ENCODE measurements at regions of chr7 and their contacts with region 1.

Region 1: GRCh38 chr7:129030440-129030839 is 24.5 kb downstream of the TNPO3 start:
- DNase-seq: no peak
- ATAC-seq: no peak
- H3K4me3 Mint-ChIP-seq: no peak overlapping the region
- H3K27ac Mint-ChIP-seq: no peak overlapping the region
- H3K4me1 Mint-ChIP-seq: peaks cover 40% of the 10 kb centered on the region
- H3K27me3 Mint-ChIP-seq: no peaks in the 10 kb centered on the region
- CTCF ChIP-seq: no peak

Region 2: DNA sequence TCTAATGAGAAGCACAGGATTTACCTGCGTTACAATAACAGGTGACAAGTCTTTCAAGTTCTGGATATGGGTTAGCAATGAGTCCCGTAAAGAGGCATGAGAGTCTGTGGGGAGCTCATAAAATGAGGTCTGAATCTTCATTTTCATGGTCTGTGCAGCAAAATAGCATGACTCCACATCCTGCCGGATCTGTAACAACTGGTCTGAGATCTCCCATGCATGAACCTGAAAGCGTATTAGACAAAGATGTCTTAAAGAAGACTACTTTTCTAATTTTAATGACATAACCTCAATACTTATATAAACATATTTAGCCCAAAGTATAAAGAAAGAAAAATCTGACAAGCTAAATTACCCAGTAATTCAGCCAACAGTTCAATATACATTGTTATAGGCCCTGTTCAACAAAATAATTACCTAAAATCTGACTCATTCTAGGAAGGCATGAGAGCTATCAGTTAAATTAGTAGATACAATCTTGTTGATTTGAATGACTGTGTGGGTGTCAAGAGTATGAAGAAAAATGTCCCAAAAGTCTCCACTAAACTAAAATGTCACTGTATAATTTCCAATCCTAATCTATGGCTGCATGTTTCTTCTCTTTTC is 12.4 kb before region 1 on chr7:
- CTCF ChIA-PET with region 1: no interaction called
- POLR2A ChIA-PET with region 1: no interaction called
- intact Hi-C with region 1: loop called (anchors 2 kb)
- DNase-seq: no peak
- ATAC-seq: peak; percentile 87
- H3K4me3 Mint-ChIP-seq: peak overlapping the region; percentile 26
- H3K27ac Mint-ChIP-seq: peak overlapping the region; percentile 76
- H3K4me1 Mint-ChIP-seq: peaks cover 43% of the 10 kb centered on the region
- H3K27me3 Mint-ChIP-seq: no peaks in the 10 kb centered on the region
- CTCF ChIP-seq: no peak

Region 3: DNA sequence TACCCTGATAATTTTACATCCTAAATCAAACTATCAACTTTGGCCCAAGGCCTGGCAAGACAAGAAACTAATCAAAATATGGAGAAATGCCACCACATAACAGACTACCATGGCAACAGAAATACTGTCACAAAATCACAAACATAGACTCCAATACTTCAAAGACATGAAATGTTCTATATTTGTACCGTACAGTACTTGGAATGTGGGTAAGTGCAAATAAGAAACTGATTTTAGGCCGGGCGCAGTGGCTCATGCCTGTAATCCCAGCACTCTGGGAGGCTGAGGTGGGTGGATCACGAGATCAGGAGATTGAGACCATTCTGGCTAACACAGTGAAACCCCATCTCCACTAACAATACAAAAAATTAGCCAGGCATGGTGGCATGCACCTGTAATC is 15.2 kb after region 1 on chr7:
- CTCF ChIA-PET with region 1: no interaction called
- POLR2A ChIA-PET with region 1: interaction called, 4 read pairs
- intact Hi-C with region 1: loop called (anchors 2 kb)
- DNase-seq: no peak
- ATAC-seq: no peak
- H3K4me3 Mint-ChIP-seq: no peak overlapping the region
- H3K27ac Mint-ChIP-seq: no peak overlapping the region
- H3K4me1 Mint-ChIP-seq: peaks cover 71% of the 10 kb centered on the region
- H3K27me3 Mint-ChIP-seq: no peaks in the 10 kb centered on the region
- CTCF ChIP-seq: no peak

Region 4: DNA sequence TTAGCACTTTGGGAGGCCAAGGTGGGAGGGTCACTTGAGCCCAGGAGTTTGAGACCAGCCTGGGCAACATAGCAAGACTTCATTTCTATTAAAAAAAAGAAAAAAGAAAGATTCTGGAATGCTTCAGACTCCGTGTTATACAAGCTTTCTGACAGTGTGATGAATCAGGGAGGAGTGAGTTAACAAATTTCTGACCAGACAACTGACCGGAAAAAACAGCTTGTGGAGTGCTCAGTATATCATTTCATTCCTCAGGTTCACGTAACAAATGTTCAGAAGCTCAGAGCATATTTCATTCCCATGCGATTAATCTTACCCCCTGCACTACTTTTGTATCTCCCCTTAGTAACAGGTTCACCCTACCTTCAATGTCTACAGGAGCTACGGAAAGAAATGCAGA is 53.1 kb after region 1 on chr7:
- CTCF ChIA-PET with region 1: no interaction called
- POLR2A ChIA-PET with region 1: no interaction called
- intact Hi-C with region 1: no loop called
- DNase-seq: no peak
- ATAC-seq: no peak
- H3K4me3 Mint-ChIP-seq: no peak overlapping the region
- H3K27ac Mint-ChIP-seq: no peak overlapping the region
- H3K4me1 Mint-ChIP-seq: no peaks in the 10 kb centered on the region
- H3K27me3 Mint-ChIP-seq: no peaks in the 10 kb centered on the region
- CTCF ChIP-seq: no peak

Region 5: GRCh38 chr7:129110258-129110981 is 80.0 kb after region 1 on chr7:
- CTCF ChIA-PET with region 1: no interaction called
- POLR2A ChIA-PET with region 1: no interaction called
- intact Hi-C with region 1: no loop called
- DNase-seq: no peak
- ATAC-seq: no peak
- H3K4me3 Mint-ChIP-seq: no peak overlapping the region
- H3K27ac Mint-ChIP-seq: no peak overlapping the region
- H3K4me1 Mint-ChIP-seq: no peaks in the 10 kb centered on the region
- H3K27me3 Mint-ChIP-seq: no peaks in the 10 kb centered on the region
- CTCF ChIP-seq: no peak

Measured in activated B cell treated with CpG ODN at 0.5 μM for 24 hours (primary cell).